H1 (cell line): ENCODE measurements at regions of chr3 and their contacts with region 1.

Region 1: DNA sequence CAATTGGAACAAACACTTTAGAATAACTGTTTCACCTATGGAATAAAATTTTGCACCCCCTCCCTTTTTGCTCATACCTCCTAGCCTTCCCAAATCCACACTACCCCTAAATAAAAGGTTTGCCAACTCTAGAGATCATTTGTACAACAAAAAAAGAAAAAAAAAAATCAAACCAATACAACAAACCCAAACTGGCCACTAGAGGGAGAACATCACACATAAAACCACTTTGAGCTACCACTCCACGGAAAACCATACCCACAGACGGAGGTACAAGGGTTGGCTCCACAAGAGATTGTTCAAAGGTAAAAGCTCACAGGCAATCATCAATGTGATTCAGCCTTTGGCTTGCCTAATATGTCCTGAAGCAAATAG is 47.6 kb downstream of the SETMAR start:
- DNase-seq: no peak
- H3K4me3 ChIP-seq: no peak overlapping the region
- H3K27ac ChIP-seq: no peak overlapping the region
- H3K4me1 ChIP-seq: no peaks in the 10 kb centered on the region
- H3K27me3 ChIP-seq: no peaks in the 10 kb centered on the region
- CTCF ChIP-seq: peak in 2 of 3 experiments; percentile 58 to 71; a peak in 2 of 4 replicates
- EP300 ChIP-seq: no peak
- POLR2A ChIP-seq: no peak
- RAD21 ChIP-seq: peak; percentile 79 to 82

Region 2: DNA sequence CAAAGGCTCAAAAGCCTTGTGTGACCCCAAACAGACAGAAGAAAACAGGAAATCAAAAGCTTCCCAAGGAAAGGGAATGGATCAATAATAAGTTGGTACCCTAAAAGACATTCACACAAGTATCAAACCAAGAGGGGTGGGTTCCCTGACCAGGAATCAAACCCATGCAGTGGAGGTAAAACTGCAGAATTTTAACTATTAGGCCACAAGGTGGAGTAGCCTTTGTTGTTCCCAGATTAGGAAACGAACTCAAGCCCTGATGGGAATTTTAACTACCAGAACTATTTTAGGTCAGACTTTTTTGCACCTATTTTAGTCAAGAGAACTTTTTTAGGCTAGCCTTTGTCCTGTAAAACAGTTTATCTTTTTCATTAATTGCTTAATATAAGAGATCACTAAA is 16.2 kb before region 1 on chr3:
- CTCF ChIA-PET with region 1: interaction called, 21 read pairs
- POLR2A ChIA-PET with region 1: no interaction called
- DNase-seq: no peak
- H3K4me3 ChIP-seq: no peak overlapping the region
- H3K27ac ChIP-seq: no peak overlapping the region
- H3K4me1 ChIP-seq: peaks cover 1 to 11% (median 6%) of the 10 kb centered on the region in 4 experiments; a peak in 4 of 7 replicates
- H3K27me3 ChIP-seq: no peaks in the 10 kb centered on the region
- CTCF ChIP-seq: peak in 2 of 3 experiments; percentile 30 to 48; a peak in 3 of 4 replicates
- EP300 ChIP-seq: no peak
- POLR2A ChIP-seq: no peak
- RAD21 ChIP-seq: peak; percentile 26 to 40; a peak in 3 of 4 replicates

Region 3: GRCh38 chr3:4340411-4341335 is 10.1 kb before region 1 on chr3:
- CTCF ChIA-PET with region 1: interaction called, 21 read pairs
- POLR2A ChIA-PET with region 1: interaction called, 3 read pairs
- DNase-seq: no peak
- H3K4me3 ChIP-seq: no peak overlapping the region
- H3K27ac ChIP-seq: no peak overlapping the region
- H3K4me1 ChIP-seq: peaks cover 0 to 7% (median 3%) of the 10 kb centered on the region in 4 experiments; a peak in 3 of 7 replicates
- H3K27me3 ChIP-seq: no peaks in the 10 kb centered on the region
- CTCF ChIP-seq: no peak
- EP300 ChIP-seq: no peak
- POLR2A ChIP-seq: no peak
- RAD21 ChIP-seq: no peak

Region 4: DNA sequence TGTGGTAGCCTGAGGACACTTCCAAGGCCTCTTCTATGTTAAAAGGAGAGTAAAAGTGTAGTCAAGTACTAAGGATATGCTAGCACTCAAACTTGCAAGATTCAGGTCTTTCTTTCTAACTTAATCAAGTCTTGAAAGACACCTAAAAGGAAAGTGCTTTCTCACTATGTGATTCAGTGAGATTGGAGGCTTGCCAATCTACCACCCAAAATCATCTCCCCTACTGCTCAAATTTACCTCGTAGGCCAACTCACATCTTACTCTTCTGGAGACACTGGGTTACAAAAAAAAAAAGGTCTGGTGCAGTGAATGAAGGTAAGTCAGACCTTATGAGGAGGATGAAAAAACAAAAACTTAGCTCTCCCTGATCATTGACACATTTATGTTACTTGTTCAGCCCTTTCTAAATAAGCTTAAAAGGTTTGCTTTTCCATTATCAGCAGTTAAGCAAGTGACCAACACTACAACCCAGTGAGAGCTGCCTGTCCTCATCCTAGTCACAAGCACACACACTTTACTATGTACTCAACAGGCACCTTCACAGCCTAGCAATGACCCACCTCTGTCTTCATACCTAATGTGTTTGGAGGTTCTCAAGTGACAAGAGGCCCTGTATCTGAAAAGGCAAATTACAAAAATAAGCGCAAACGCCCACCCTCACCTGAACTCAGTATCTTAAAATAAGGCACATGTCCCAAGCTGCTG is 96.7 kb after region 1 on chr3:
- CTCF ChIA-PET with region 1: interaction called, 12 read pairs
- POLR2A ChIA-PET with region 1: no interaction called
- DNase-seq: no peak
- H3K4me3 ChIP-seq: peak overlapping the region in 1 of 4 experiments; percentile 18; a peak in 1 of 8 replicates
- H3K27ac ChIP-seq: no peak overlapping the region
- H3K4me1 ChIP-seq: peaks cover 0 to 7% (median 6%) of the 10 kb centered on the region in 4 experiments; a peak in 4 of 7 replicates
- H3K27me3 ChIP-seq: no peaks in the 10 kb centered on the region
- CTCF ChIP-seq: no peak
- EP300 ChIP-seq: no peak
- POLR2A ChIP-seq: no peak
- RAD21 ChIP-seq: no peak

Region 5: GRCh38 chr3:4546346-4547178 is 195.8 kb after region 1 on chr3:
- CTCF ChIA-PET with region 1: no interaction called
- POLR2A ChIA-PET with region 1: no interaction called
- DNase-seq: no peak
- H3K4me3 ChIP-seq: no peak overlapping the region
- H3K27ac ChIP-seq: no peak overlapping the region
- H3K4me1 ChIP-seq: no peaks in the 10 kb centered on the region
- H3K27me3 ChIP-seq: no peaks in the 10 kb centered on the region
- CTCF ChIP-seq: no peak
- EP300 ChIP-seq: no peak
- POLR2A ChIP-seq: no peak
- RAD21 ChIP-seq: no peak

Region 6: GRCh38 chr3:4571690-4572334 is 221.0 kb after region 1 on chr3:
- CTCF ChIA-PET with region 1: interaction called, 10 read pairs
- POLR2A ChIA-PET with region 1: no interaction called
- DNase-seq: no peak
- H3K4me3 ChIP-seq: no peak overlapping the region
- H3K27ac ChIP-seq: no peak overlapping the region
- H3K4me1 ChIP-seq: peaks cover 0 to 2% (median 0%) of the 10 kb centered on the region in 4 experiments; a peak in 1 of 7 replicates
- H3K27me3 ChIP-seq: no peaks in the 10 kb centered on the region
- CTCF ChIP-seq: peak in 2 of 3 experiments; percentile 44 to 52; a peak in 3 of 4 replicates
- EP300 ChIP-seq: no peak
- POLR2A ChIP-seq: no peak
- RAD21 ChIP-seq: peak; percentile 51 to 64

Region 7: DNA sequence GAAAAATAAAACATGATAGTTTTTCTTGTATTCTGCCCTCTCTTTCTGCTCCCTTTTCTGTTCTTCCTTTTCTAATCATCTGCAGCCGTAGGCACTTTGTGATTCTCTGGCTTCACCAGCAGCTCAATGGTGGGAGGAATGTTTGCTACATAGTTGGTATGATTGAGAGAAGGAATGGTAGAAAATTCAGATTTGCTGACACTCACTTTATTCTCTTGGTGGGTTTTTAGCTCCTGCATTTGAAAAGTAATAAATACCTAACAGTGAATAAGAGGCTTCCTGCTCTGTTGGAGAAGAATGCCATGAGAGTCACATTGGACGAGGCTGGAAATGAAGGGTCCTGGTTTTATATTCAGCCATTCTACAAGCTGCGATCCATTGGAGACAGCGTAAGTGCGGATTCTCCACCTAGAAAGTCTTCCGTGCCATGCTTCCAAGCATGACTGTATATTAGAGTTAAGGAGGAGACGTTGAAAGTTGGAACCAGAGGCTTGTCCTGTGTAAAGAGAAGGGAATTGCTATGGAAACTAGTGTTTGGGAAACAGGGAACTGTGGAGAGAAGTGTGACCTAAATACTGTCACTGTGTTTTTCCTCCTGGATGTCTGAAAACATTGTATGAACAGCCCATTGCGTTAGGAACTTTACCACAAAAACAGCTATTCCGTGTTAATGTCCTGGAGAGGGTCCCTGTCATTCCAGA is 291.2 kb after region 1 on chr3:
- CTCF ChIA-PET with region 1: interaction called, 11 read pairs
- POLR2A ChIA-PET with region 1: no interaction called
- DNase-seq: no peak
- H3K4me3 ChIP-seq: no peak overlapping the region
- H3K27ac ChIP-seq: no peak overlapping the region
- H3K4me1 ChIP-seq: no peaks in the 10 kb centered on the region
- H3K27me3 ChIP-seq: no peaks in the 10 kb centered on the region
- CTCF ChIP-seq: no peak
- EP300 ChIP-seq: no peak
- POLR2A ChIP-seq: no peak
- RAD21 ChIP-seq: no peak